Psoas muscle (tissue), 8 donors: ENCODE measurements at regions of chr7 and their contacts with region 1.

Region 1: GRCh38 chr7:96855139-96855538 is 145.5 kb upstream of the SEM1 start:
- DNase-seq: no peak
- ATAC-seq: no peak
- H3K4me3 ChIP-seq: no peak overlapping the region
- H3K27ac ChIP-seq: no peak overlapping the region
- H3K4me1 ChIP-seq: no peaks in the 10 kb centered on the region
- H3K27me3 ChIP-seq: no peaks in the 10 kb centered on the region
- CTCF ChIP-seq: no peak

Region 2: DNA sequence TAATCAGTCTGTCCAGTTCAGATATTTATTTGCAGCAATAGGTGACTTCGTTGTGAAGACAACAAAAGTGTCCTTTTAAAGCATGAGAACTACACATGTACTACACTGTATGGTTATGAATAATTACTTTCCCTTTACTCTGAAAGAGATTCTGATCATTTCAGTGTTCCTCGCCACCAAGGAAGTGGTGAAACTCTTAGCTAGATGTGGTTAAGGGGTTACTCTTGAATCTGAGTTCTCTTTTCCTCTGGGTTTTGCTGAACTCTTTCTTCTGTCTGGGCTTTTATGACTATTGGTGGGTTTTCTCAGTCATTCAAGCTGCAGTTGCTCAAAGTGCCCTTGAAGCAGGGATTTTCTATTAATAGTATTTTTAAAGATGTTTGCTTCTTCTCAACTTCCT is 17.5 kb before region 1 on chr7:
- intact Hi-C with region 1: loop called in 1 of 2 experiments (anchors 1 kb)
- DNase-seq: no peak
- ATAC-seq: no peak
- H3K4me3 ChIP-seq: no peak overlapping the region
- H3K27ac ChIP-seq: no peak overlapping the region
- H3K4me1 ChIP-seq: no peaks in the 10 kb centered on the region
- H3K27me3 ChIP-seq: no peaks in the 10 kb centered on the region
- CTCF ChIP-seq: no peak